Spleen (tissue), 13 donors: ENCODE measurements at regions of chr18 and their contacts with region 1.

Region 1: GRCh38 chr18:41444943-41445342 is 510.1 kb upstream of the PIK3C3 start:
- DNase-seq: no peak
- H3K4me3 ChIP-seq: no peak overlapping the region
- H3K27ac ChIP-seq: no peak overlapping the region
- H3K4me1 ChIP-seq: no peaks in the 10 kb centered on the region
- H3K27me3 ChIP-seq: no peaks in the 10 kb centered on the region
- CTCF ChIP-seq: no peak
- POLR2A ChIP-seq: no peak

Region 2: DNA sequence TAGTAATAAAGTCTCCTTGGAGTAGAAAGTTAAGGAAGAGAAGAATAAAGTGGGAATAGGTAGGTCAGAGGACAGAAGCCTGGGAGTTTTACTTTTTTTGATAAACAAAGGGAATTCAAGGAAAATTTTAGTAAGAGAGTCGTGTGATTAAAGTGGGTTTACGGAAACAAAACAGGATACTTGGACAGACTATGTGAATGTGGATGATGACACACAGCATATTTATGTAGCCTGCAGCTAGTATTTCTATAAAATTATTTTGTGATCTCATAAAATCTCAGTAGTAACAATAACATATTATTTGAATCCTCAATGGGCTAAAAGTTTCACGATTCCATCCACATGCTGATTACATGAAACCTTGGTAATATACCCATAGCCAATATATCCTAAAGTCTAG is 59.4 kb after region 1 on chr18:
- intact Hi-C with region 1: loop called (anchors 10 kb)
- DNase-seq: no peak
- H3K4me3 ChIP-seq: no peak overlapping the region
- H3K27ac ChIP-seq: no peak overlapping the region
- H3K4me1 ChIP-seq: no peaks in the 10 kb centered on the region
- H3K27me3 ChIP-seq: no peaks in the 10 kb centered on the region
- CTCF ChIP-seq: no peak
- POLR2A ChIP-seq: no peak